ENCODE measurements at regions of chr1 and their contacts with region 1.

Region 1: DNA sequence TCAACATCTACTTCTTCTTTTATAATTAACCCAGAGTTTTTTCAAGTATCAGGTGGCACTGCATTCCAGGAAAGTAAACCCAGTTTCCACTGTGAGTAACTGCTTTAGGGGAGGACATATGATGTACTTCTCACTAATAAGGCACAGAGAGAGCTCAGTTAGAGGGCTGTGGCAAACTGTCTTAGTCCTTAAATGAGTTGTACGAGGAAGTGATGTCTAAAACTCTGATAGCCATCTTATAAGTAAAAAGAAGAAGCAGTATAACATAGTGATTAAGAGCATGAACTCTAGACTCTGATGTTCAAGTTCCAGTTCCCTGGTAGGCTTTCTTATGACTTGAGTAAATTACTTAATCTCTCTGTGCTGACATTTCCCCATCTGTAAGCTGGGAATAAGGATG is 58.7 kb upstream of the PTGS2 start:
- DNase-seq: peak; percentile 16
- H3K4me3 Mint-ChIP-seq: no peak overlapping the region
- H3K27ac Mint-ChIP-seq: peak overlapping the region; percentile 60
- H3K4me1 Mint-ChIP-seq: peaks cover 31% of the 10 kb centered on the region
- H3K27me3 Mint-ChIP-seq: peaks cover 5% of the 10 kb centered on the region

Region 2: GRCh38 chr1:186566140-186566850 is 172.6 kb before region 1 on chr1:
- CTCF ChIA-PET with region 1: no interaction called
- POLR2A ChIA-PET with region 1: no interaction called
- DNase-seq: no peak
- H3K4me3 Mint-ChIP-seq: no peak overlapping the region
- H3K27ac Mint-ChIP-seq: no peak overlapping the region
- H3K4me1 Mint-ChIP-seq: no peaks in the 10 kb centered on the region
- H3K27me3 Mint-ChIP-seq: no peaks in the 10 kb centered on the region

Region 3: DNA sequence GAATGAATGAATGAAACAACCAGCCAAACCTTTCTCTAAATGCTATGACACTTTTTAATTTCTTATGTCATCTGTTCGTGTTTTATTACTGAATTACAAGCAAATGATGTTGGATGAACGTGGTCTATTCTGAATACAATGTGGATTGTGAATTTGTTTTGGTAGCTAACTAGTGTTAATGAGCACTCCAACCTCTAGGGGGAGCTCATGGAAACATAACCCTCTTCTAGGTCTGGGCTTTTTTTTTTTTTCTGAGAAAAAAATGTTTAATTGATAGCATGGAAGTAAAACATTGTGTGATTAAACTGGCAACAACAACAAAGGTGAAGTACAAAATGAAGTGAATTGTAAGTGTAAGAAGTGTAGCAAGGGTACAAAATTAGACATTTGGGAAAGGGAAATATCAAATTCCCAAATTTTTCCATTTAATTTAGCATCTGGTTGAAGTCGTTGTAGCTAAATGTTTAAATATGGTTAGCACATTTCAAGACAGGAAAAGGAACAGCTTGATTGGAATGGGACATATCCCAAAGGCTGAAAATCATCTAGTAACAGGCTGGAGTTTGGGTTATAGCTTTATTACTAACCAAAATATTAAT is 16.1 kb before region 1 on chr1:
- CTCF ChIA-PET with region 1: interaction called, 12 read pairs
- POLR2A ChIA-PET with region 1: no interaction called
- DNase-seq: no peak
- H3K4me3 Mint-ChIP-seq: no peak overlapping the region
- H3K27ac Mint-ChIP-seq: no peak overlapping the region
- H3K4me1 Mint-ChIP-seq: no peaks in the 10 kb centered on the region
- H3K27me3 Mint-ChIP-seq: peaks cover 2% of the 10 kb centered on the region

Region 4: GRCh38 chr1:186806477-186806876 is 67.6 kb after region 1 on chr1:
- CTCF ChIA-PET with region 1: no interaction called
- POLR2A ChIA-PET with region 1: no interaction called
- DNase-seq: no peak
- H3K4me3 Mint-ChIP-seq: no peak overlapping the region
- H3K27ac Mint-ChIP-seq: no peak overlapping the region
- H3K4me1 Mint-ChIP-seq: no peaks in the 10 kb centered on the region
- H3K27me3 Mint-ChIP-seq: peaks cover 3% of the 10 kb centered on the region

Measured in activated CD4-positive, alpha-beta memory T cell treated with anti-CD3 and anti-CD28 coated beads, Interleukin-2, amount 10 ng/mL, durations not matched to agents 7 days and 5 days (primary cell).